ENCODE measurements at regions of chr6 and their contacts with region 1.

Region 1: GRCh38 chr6:31197559-31198305 is 27.2 kb upstream of the POU5F1 start:
- DNase-seq: peak; percentile 92 to 98 (median 95)
- H3K4me3 ChIP-seq: peak overlapping the region; percentile 80
- H3K4me3 Mint-ChIP-seq: peak overlapping the region; percentile 80 to 98 (median 87)
- H3K27ac ChIP-seq: peak overlapping the region; percentile 99
- H3K27ac Mint-ChIP-seq: peak overlapping the region; percentile 87 to 100 (median 94)
- H3K4me1 ChIP-seq: peaks cover 49% of the 10 kb centered on the region
- H3K4me1 Mint-ChIP-seq: peaks cover 57 to 74% (median 62%) of the 10 kb centered on the region in 3 donors
- H3K27me3 ChIP-seq: no peaks in the 10 kb centered on the region
- H3K27me3 Mint-ChIP-seq: peaks cover 0 to 3% of the 10 kb centered on the region in 2 donors

Region 2: DNA sequence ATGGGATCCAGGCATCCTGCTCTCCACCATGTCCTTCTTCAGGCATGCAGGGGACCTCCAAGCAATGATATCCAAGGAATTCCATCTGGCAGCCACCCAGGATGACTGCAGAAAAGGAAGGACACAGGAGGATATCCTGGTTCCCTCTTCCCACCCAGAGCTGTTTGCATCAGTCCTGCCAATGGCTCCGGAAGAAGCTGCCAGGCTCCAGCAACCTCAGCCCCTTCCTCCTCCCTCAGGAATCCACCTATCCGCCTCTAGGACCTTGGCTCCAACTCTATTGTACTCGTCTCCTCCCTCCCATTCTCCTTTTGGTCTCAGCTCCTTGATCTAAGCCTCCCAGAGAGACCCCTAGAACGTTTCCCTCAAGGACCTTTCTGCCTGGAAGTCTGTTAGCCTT is 58.1 kb before region 1 on chr6:
- CTCF ChIA-PET with region 1: interaction called, 27 read pairs
- POLR2A ChIA-PET with region 1: no interaction called
- DNase-seq: no peak
- H3K4me3 ChIP-seq: no peak overlapping the region
- H3K4me3 Mint-ChIP-seq: no peak overlapping the region
- H3K27ac ChIP-seq: no peak overlapping the region
- H3K27ac Mint-ChIP-seq: peak overlapping the region in 1 of 8 donors; percentile 41
- H3K4me1 ChIP-seq: peaks cover 5% of the 10 kb centered on the region
- H3K4me1 Mint-ChIP-seq: peaks cover 4 to 6% (median 5%) of the 10 kb centered on the region in 3 donors
- H3K27me3 ChIP-seq: no peaks in the 10 kb centered on the region
- H3K27me3 Mint-ChIP-seq: no peaks in the 10 kb centered on the region

Region 3: DNA sequence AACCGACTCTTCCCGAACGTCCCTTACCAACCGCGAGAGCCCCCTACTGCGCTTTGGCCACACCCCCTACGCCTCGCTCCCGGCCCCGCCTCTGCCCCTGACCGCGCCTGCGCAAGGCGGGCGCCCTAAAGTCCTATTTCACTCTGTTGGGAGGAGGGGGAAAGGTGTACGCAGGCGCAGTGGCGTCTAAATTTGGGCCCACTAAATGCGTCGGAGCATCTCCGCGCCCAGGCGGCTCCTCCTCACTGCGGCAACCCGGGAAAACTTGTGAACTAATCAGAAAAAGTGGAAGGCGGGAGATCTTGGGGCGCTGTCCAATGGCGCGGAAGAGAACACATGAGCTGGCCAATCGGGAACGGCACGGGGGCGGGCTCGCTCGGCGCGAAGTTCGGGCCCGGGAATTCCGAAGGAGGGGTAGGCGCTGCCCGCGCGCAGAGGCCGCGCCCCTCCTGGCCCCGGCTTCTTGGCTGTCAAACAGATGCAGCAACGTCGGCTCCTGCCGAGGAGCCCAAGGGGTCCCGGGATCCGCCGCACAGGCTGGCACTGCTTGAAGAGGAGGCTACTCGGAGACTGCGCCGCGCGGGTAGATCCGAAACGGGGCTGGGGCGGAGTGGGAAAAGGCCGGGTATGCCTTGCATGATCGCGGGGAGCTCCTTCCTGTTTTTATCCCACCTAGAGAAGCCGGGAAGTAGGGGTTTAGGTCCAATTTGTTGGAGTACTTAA is 39.4 kb before region 1 on chr6 and contains the start of gene TCF19:
- CTCF ChIA-PET with region 1: no interaction called
- POLR2A ChIA-PET with region 1: interaction called, 12 read pairs
- DNase-seq: peak; percentile 99 to 100 (median 99)
- H3K4me3 ChIP-seq: peak within 1 kb of the TSS; percentile 88
- H3K4me3 Mint-ChIP-seq: peak within 1 kb of the TSS; percentile 80 to 98 (median 88)
- H3K27ac ChIP-seq: peak within 1 kb of the TSS; percentile 70
- H3K27ac Mint-ChIP-seq: peak within 1 kb of the TSS; percentile 10 to 96 (median 90)
- H3K4me1 ChIP-seq: peaks cover 18% of the 10 kb centered on the region
- H3K4me1 Mint-ChIP-seq: peaks cover 23 to 35% (median 33%) of the 10 kb centered on the region in 3 donors
- H3K27me3 ChIP-seq: no peaks in the 10 kb centered on the region
- H3K27me3 Mint-ChIP-seq: no peaks in the 10 kb centered on the region
- total RNA-seq, gene TCF19: 102 to 103 TPM

Region 4: DNA sequence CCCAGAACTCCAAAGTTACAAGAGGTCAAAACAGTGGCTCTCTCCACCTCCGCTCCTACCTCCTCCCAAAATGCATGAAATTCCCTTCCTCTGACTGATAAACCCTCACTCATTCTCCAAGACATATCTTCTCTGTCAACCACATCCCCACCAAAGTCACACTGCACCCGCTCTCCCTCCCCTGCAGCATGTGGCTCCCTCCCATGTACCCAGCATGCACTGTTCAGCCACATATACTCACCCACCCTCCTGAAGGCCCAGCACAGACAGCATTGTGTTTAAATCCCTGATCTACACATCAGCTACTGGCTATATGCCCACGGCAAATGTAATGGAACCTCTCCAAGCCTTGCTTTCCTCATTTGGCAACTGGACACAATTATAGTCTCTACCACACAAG is 21.8 kb before region 1 on chr6:
- CTCF ChIA-PET with region 1: no interaction called
- POLR2A ChIA-PET with region 1: no interaction called
- DNase-seq: no peak
- H3K4me3 ChIP-seq: no peak overlapping the region
- H3K4me3 Mint-ChIP-seq: peak overlapping the region in 1 of 7 donors; percentile 9
- H3K27ac ChIP-seq: no peak overlapping the region
- H3K27ac Mint-ChIP-seq: peak overlapping the region in 4 of 8 donors; percentile 4 to 53 (median 15)
- H3K4me1 ChIP-seq: no peaks in the 10 kb centered on the region
- H3K4me1 Mint-ChIP-seq: peaks cover 19 to 30% (median 26%) of the 10 kb centered on the region in 3 donors
- H3K27me3 ChIP-seq: no peaks in the 10 kb centered on the region
- H3K27me3 Mint-ChIP-seq: no peaks in the 10 kb centered on the region

Region 5: DNA sequence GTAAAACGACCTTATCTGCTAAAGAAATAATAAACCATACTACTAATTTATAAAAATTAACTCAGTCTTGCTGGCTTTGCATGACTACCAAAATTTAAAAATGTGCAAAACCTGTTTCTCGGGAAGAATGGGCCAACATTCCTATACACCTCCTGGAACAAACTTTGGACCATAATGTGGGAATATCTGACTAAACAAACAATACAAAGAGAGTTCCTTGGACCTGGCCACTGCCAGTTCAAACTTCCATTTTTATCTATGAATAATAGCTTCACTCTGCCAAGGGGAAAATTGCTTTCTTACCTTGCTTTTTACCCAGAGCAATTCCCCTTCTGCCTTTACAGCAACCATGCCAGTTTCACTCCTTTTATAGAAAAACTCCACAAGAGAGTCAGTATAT is 11.4 kb after region 1 on chr6:
- CTCF ChIA-PET with region 1: interaction called, 13 read pairs
- POLR2A ChIA-PET with region 1: no interaction called
- DNase-seq: no peak
- H3K4me3 ChIP-seq: no peak overlapping the region
- H3K4me3 Mint-ChIP-seq: no peak overlapping the region
- H3K27ac ChIP-seq: no peak overlapping the region
- H3K27ac Mint-ChIP-seq: no peak overlapping the region
- H3K4me1 ChIP-seq: peaks cover 9% of the 10 kb centered on the region
- H3K4me1 Mint-ChIP-seq: peaks cover 10 to 19% (median 16%) of the 10 kb centered on the region in 3 donors
- H3K27me3 ChIP-seq: no peaks in the 10 kb centered on the region
- H3K27me3 Mint-ChIP-seq: peaks cover 0 to 1% of the 10 kb centered on the region in 2 donors

Region 6: GRCh38 chr6:31239854-31240253 is 42.1 kb after region 1 on chr6:
- CTCF ChIA-PET with region 1: no interaction called
- POLR2A ChIA-PET with region 1: no interaction called
- DNase-seq: no peak
- H3K4me3 ChIP-seq: no peak overlapping the region
- H3K4me3 Mint-ChIP-seq: no peak overlapping the region
- H3K27ac ChIP-seq: no peak overlapping the region
- H3K27ac Mint-ChIP-seq: peak overlapping the region in 1 of 8 donors; percentile 64
- H3K4me1 ChIP-seq: no peaks in the 10 kb centered on the region
- H3K4me1 Mint-ChIP-seq: peaks cover 0 to 10% (median 0%) of the 10 kb centered on the region in 3 donors
- H3K27me3 ChIP-seq: no peaks in the 10 kb centered on the region
- H3K27me3 Mint-ChIP-seq: peaks cover 13 to 35% of the 10 kb centered on the region in 2 donors

Region 7: DNA sequence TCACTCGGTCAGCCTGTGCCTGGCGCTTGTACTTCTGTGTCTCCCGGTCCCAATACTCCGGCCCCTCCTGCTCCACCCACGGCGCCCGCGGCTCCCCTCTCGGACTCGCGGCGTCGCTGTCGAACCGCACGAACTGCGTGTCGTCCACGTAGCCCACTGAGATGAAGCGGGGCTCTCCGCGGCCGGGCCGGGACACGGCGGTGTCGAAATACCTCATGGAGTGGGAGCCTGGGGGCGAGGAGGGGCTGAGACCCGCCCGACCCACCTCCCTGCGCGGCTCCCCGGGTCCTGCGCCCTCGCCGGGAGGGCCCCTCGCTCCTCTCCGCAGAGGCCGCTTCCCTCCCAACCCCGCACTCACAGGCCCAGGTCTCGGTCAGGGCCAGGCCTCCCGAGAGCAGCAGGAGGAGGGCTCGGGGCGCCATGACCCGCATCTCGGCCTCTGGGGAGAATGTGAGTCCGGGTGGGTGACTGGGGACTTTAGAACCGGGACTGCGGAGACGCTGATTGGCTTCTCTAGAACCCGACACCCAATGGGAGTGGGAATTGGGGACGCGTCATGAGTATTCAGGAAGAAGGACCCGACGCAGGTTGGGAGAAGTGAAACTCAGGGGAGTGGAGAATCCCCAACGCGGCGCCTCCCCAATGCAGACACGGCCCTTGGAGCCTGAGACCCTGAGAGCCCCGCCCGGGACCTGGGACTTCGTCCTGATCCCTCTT is 74.1 kb after region 1 on chr6 and contains the start of gene HLA-C:
- CTCF ChIA-PET with region 1: interaction called, 11 read pairs
- POLR2A ChIA-PET with region 1: interaction called, 24 read pairs
- DNase-seq: peak; percentile 86 to 97 (median 91)
- H3K4me3 ChIP-seq: peak within 1 kb of the TSS; percentile 78
- H3K4me3 Mint-ChIP-seq: peak within 1 kb of the TSS; percentile 94 to 100 (median 98)
- H3K27ac ChIP-seq: peak within 1 kb of the TSS; percentile 89
- H3K27ac Mint-ChIP-seq: peak within 1 kb of the TSS; percentile 99 to 100 (median 100)
- H3K4me1 ChIP-seq: peaks cover 49% of the 10 kb centered on the region
- H3K4me1 Mint-ChIP-seq: peaks cover 58 to 70% (median 62%) of the 10 kb centered on the region in 3 donors
- H3K27me3 ChIP-seq: no peaks in the 10 kb centered on the region
- H3K27me3 Mint-ChIP-seq: peaks cover 0 to 20% of the 10 kb centered on the region in 2 donors
- total RNA-seq, gene HLA-C: 823 to 860 TPM

Region 8: GRCh38 chr6:31356946-31357466 is 159.3 kb after region 1 on chr6 and contains the start of gene HLA-B:
- CTCF ChIA-PET with region 1: interaction called, 5 read pairs
- POLR2A ChIA-PET with region 1: interaction called, 10 read pairs
- DNase-seq: peak; percentile 77 to 94 (median 84)
- H3K4me3 ChIP-seq: peak within 1 kb of the TSS; percentile 100
- H3K4me3 Mint-ChIP-seq: peak within 1 kb of the TSS; percentile 96 to 100 (median 97)
- H3K27ac ChIP-seq: peak within 1 kb of the TSS; percentile 99
- H3K27ac Mint-ChIP-seq: peak within 1 kb of the TSS; percentile 100
- H3K4me1 ChIP-seq: peaks cover 43% of the 10 kb centered on the region
- H3K4me1 Mint-ChIP-seq: peaks cover 58 to 64% (median 62%) of the 10 kb centered on the region in 3 donors
- H3K27me3 ChIP-seq: no peaks in the 10 kb centered on the region
- H3K27me3 Mint-ChIP-seq: peaks cover 8 to 36% of the 10 kb centered on the region in 2 donors
- total RNA-seq, gene HLA-B: 3,705 to 3,812 TPM

Region 9: DNA sequence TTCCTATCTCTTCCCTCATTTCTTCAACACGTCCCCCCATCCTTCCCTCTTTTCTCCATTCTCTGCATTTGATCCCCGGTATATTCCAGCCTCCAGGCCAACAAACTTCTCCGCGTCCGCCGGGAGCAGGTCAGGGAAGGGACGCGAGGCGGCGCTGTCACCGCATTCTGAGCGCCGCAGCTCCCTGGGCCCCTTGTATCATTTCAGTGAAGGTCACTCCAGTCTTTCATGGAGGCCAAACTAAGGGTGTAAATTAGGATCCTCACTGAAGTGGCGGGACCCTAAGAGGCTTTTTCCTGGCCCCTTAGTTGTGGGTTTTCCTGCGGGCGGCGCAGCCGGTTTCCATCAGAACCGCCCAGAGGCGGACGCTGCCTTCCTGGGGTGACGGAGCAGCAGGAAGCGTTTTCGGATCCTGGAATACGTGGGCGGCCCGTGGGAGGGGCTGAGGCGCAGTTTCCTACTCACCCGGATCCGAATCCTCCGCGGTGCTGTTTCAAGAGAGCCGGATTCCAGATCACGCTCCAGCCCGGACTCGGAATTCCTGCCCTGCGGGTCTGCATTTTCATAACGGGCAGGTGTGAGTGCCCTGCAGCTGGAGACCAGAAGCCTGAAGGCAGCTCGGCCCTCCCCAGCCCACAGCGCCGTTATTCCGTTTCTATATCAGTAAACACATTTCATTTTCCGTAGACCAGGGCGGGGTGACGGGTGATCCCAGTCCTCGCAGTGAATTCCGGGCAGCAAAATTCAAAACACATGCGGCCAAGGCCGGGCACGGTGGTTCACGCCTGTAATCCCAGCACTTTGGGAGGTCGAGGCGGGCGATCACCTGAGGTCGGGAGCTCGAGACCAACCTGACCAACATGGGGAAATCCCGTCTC is 202.1 kb after region 1 on chr6:
- CTCF ChIA-PET with region 1: interaction called, 9 read pairs
- POLR2A ChIA-PET with region 1: interaction called, 12 read pairs
- DNase-seq: peak; percentile 47 to 71 (median 57)
- H3K4me3 ChIP-seq: peak overlapping the region; percentile 94
- H3K4me3 Mint-ChIP-seq: peak overlapping the region; percentile 88 to 98 (median 92)
- H3K27ac ChIP-seq: peak overlapping the region; percentile 87
- H3K27ac Mint-ChIP-seq: peak overlapping the region; percentile 82 to 98 (median 94)
- H3K4me1 ChIP-seq: peaks cover 45% of the 10 kb centered on the region
- H3K4me1 Mint-ChIP-seq: peaks cover 58 to 80% (median 62%) of the 10 kb centered on the region in 3 donors
- H3K27me3 ChIP-seq: no peaks in the 10 kb centered on the region
- H3K27me3 Mint-ChIP-seq: no peaks in the 10 kb centered on the region